ENCODE measurements at regions of chr12 and their contacts with region 1.

Region 1: GRCh38 chr12:70576346-70577282 is 60.6 kb downstream of the PTPRB start:
- DNase-seq: peak; percentile 71
- H3K4me3 ChIP-seq: no peak overlapping the region
- H3K27ac ChIP-seq: no peak overlapping the region
- H3K4me1 ChIP-seq: no peaks in the 10 kb centered on the region
- CTCF ChIP-seq: peak; percentile 91

Region 2: GRCh38 chr12:69879041-69879960 is 697.3 kb before region 1 on chr12:
- CTCF ChIA-PET with region 1: interaction called, 8 read pairs
- POLR2A ChIA-PET with region 1: interaction called, 3 read pairs
- intact Hi-C with region 1: loop called (anchors 1 kb)
- DNase-seq: peak; percentile 85
- H3K4me3 ChIP-seq: peak overlapping the region; percentile 21
- H3K27ac ChIP-seq: no peak overlapping the region
- H3K4me1 ChIP-seq: peaks cover 7% of the 10 kb centered on the region
- CTCF ChIP-seq: peak; percentile 98

Region 3: DNA sequence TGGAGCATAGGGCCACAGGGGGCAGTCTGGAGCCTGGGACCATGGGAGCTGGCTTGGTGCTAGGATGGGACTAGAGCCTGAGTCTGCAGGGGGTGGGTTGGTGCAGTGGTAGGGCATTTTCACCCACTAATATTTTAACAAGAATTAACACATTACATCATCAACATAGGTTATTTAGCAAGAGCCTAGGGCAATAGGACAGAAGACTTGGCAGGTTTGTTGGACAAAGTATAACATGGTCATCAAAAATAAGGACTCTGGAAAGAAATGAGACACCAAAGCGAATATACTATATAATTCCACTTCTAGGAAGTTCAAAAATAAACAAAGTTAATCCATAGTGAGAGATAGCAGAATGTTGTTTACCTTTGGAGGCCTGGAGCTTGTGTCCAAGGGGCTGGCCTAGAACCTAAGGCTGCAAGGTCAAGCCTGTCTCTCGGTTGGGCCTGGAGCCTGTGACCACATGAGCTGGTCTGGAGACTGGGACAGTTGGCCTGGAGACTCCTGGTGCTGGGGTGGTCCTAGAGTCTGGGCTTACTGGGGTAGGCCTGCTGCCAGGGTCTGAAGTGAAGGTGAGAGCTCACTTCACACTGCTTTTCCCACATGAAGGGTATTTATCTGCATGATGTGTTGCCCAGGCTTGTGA is 361.5 kb before region 1 on chr12:
- CTCF ChIA-PET with region 1: no interaction called
- POLR2A ChIA-PET with region 1: no interaction called
- intact Hi-C with region 1: loop called (anchors 10 kb)
- DNase-seq: no peak
- H3K4me3 ChIP-seq: no peak overlapping the region
- H3K27ac ChIP-seq: no peak overlapping the region
- H3K4me1 ChIP-seq: no peaks in the 10 kb centered on the region
- CTCF ChIP-seq: no peak

Region 4: DNA sequence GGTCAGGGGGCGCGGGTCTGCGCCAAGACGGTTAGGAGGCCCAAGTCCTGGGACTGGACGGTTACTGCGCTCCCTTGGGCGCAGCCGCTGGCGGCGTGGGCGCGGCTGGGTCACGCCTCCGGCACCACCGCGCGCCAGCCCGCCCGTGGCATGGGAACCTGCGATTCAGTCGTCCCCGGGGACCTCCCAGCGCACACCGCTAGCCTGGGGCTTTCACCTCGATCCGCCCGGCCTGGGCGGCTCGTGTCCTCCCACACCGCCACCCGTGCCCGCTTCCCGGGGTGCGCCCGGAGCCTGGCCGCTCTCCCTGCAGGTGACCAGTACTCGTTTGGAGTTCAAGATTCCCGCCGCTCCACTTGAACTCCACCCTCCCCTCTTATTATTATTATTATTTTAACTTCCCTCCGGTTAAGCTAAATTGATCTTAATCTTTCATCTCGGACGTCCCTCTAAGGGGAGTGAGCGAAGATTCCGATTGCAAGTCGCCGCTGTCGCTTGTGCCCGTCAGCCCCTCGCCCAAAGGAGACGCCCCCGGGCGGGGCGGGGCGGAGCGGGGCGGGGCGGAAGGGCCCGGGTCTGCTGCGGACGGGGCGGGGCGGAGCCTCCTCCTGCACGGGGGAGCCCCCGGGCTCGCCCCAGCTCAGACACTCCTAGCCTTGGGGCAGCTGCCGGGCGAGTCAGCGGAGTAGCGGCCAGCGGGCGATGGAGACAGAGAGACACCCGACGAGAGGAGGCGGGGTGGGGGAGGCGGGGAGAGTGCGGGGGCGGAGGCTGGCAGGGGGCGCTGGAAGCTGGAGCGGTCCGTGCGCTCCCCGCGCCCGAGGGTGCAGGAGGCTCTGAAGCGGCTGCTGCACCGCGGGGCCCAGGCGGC is 210.7 kb before region 1 on chr12 and contains the start of gene KCNMB4:
- CTCF ChIA-PET with region 1: no interaction called
- POLR2A ChIA-PET with region 1: no interaction called
- intact Hi-C with region 1: loop called (anchors 10 kb)
- DNase-seq: peak; percentile 82
- H3K4me3 ChIP-seq: peak within 1 kb of the TSS; percentile 74
- H3K27ac ChIP-seq: peak within 1 kb of the TSS; percentile 50
- H3K4me1 ChIP-seq: peaks cover 47% of the 10 kb centered on the region
- CTCF ChIP-seq: 0 out of 2 replicates have a peak, but pooled peaks have one; percentile 20
- total RNA-seq, gene KCNMB4: 3.0 and 5.8 TPM in 2 replicates

Region 5: GRCh38 chr12:70487440-70487839 is 89.2 kb before region 1 on chr12:
- CTCF ChIA-PET with region 1: no interaction called
- POLR2A ChIA-PET with region 1: no interaction called
- intact Hi-C with region 1: loop called (anchors 1 kb)
- DNase-seq: peak; percentile 51
- H3K4me3 ChIP-seq: peak overlapping the region; percentile 9
- H3K27ac ChIP-seq: peak overlapping the region; percentile 63
- H3K4me1 ChIP-seq: peaks cover 44% of the 10 kb centered on the region
- CTCF ChIP-seq: no peak

Region 6: GRCh38 chr12:70560671-70561070 is 15.9 kb before region 1 on chr12:
- CTCF ChIA-PET with region 1: no interaction called
- POLR2A ChIA-PET with region 1: no interaction called
- intact Hi-C with region 1: no loop called
- DNase-seq: no peak
- H3K4me3 ChIP-seq: no peak overlapping the region
- H3K27ac ChIP-seq: no peak overlapping the region
- H3K4me1 ChIP-seq: no peaks in the 10 kb centered on the region
- CTCF ChIP-seq: no peak